ENCODE measurements at regions of chr1 and their contacts with region 1.

Region 1: DNA sequence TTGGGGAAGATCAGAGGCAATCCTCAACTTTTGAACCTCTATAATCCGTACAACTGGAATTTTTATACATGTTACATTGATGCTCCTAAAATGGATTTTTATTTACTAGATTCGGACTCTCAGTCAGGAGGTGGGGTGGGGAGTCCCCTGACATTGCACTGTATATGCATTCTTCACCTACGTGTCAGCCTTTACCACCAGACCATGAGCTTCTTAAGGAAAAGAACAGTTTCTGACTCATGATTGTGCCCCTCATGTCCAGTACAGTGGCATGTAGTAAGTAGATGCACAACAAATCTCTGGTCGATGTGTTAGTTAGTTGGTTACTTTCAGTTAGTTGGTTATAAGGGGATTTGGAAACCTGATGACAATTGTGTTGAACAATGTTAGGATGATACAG is 15.4 kb downstream of the LPAR3 start:
- DNase-seq: no peak
- ATAC-seq: no peak

Region 2: DNA sequence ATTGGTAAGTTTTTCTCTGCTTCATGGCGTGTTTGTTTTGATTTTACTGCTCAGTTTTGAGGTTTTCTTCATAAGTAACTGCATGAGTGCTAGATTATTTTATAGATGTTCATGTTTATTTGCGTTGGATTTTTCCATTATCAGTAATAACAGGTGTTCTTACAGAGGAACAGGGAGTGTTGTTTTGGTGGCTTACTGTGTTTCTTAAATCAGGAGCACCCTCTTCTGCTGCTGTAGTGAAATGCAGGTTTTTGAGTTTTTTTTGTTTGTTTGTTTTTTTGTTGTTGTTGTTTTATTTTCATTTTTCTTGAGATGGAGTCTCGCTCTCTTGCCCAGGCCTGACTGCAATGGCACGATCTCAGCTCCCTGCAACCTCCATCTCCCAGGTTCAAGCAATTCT is 335.9 kb before region 1 on chr1:
- intact Hi-C with region 1: no loop called
- DNase-seq: no peak
- ATAC-seq: no peak

Region 3: GRCh38 chr1:85015826-85016225 is 138.2 kb after region 1 on chr1:
- intact Hi-C with region 1: loop called (anchors 5 kb)
- DNase-seq: no peak
- ATAC-seq: no peak

Measured in sciatic nerve (tissue), 2 donors.